Activated T-helper 2 cell treated with anti-CD3 and anti-CD28 coated beads, Interferon-gamma antibody, Interleukin-2, Interleukin-4, amounts not matched to agents 10 μg/mL and 5 μg/mL and 100 μg/mL, durations not matched to agents 14 hours and 24 hours and 36 hours (primary cell): ENCODE measurements at regions of chr2 and their contacts with region 1.

Region 1: GRCh38 chr2:207473049-207473930 is 56.5 kb upstream of the CREB1 start:
- DNase-seq: peak; percentile 37
- H3K4me3 Mint-ChIP-seq: no peak overlapping the region
- H3K27ac Mint-ChIP-seq: no peak overlapping the region
- H3K4me1 Mint-ChIP-seq: peaks cover 38% of the 10 kb centered on the region
- H3K27me3 Mint-ChIP-seq: no peaks in the 10 kb centered on the region

Region 2: GRCh38 chr2:206693399-206694137 is 779.7 kb before region 1 on chr2:
- intact Hi-C with region 1: loop called (anchors 2 kb)
- DNase-seq: no peak
- H3K4me3 Mint-ChIP-seq: no peak overlapping the region
- H3K27ac Mint-ChIP-seq: no peak overlapping the region
- H3K4me1 Mint-ChIP-seq: no peaks in the 10 kb centered on the region
- H3K27me3 Mint-ChIP-seq: peaks cover 16% of the 10 kb centered on the region

Region 3: GRCh38 chr2:206800506-206801417 is 672.5 kb before region 1 on chr2:
- intact Hi-C with region 1: loop called (anchors 1 kb)
- DNase-seq: peak; percentile 40
- H3K4me3 Mint-ChIP-seq: peak overlapping the region; percentile 57
- H3K27ac Mint-ChIP-seq: peak overlapping the region; percentile 13
- H3K4me1 Mint-ChIP-seq: peaks cover 18% of the 10 kb centered on the region
- H3K27me3 Mint-ChIP-seq: no peaks in the 10 kb centered on the region

Region 4: DNA sequence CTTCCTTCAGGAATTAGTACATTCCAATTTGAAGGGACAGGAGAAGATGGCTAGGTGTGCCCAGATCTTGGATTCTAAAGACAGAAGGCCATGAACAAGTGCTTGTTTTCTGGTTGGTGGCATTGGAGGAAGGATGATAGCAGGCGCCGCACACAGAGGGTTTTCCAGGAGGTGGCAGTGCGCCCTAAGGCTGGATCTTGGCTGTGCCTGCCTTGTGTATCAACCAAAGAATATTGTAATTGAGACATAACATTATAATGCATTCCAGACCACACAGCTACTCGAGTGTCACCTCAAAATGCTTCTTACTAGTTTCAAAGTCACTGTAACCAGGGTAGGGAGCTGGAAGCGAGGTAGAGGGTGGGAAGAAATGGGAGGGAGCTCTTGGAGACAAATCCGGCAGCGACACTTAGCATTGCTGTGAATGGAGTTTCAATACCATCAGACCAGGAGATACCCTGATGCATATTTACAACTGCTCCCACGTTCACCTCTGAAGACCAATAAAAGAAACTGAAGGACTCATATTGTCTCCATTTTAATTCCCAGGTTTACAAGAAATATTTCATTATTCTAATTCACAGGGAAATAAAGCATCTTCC is 491.4 kb before region 1 on chr2:
- intact Hi-C with region 1: loop called (anchors 1 kb)
- DNase-seq: peak; percentile 28
- H3K4me3 Mint-ChIP-seq: no peak overlapping the region
- H3K27ac Mint-ChIP-seq: no peak overlapping the region
- H3K4me1 Mint-ChIP-seq: peaks cover 20% of the 10 kb centered on the region
- H3K27me3 Mint-ChIP-seq: peaks cover 11% of the 10 kb centered on the region

Region 5: DNA sequence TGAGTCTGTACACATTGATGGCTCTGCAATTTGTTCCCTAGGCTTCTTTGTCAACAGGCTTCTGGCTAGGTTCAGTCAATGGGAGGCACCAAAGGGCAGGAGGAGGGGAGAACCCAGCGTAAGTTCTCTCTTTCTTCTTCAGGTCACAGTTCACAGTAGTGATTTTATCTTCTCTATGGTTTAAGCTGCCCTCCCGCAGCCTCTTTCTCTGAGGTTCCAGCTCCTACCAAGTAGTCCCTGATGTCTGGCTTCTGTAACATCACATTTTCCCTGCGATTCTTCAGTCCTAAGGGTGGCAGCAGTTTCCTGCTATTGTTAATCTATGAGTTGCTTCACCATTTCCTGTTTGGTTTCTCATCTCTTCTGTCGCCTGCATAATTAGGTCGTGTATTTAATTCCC is 426.6 kb before region 1 on chr2:
- intact Hi-C with region 1: loop called (anchors 1 kb)
- DNase-seq: peak; percentile 17
- H3K4me3 Mint-ChIP-seq: no peak overlapping the region
- H3K27ac Mint-ChIP-seq: no peak overlapping the region
- H3K4me1 Mint-ChIP-seq: peaks cover 12% of the 10 kb centered on the region
- H3K27me3 Mint-ChIP-seq: peaks cover 10% of the 10 kb centered on the region

Region 6: DNA sequence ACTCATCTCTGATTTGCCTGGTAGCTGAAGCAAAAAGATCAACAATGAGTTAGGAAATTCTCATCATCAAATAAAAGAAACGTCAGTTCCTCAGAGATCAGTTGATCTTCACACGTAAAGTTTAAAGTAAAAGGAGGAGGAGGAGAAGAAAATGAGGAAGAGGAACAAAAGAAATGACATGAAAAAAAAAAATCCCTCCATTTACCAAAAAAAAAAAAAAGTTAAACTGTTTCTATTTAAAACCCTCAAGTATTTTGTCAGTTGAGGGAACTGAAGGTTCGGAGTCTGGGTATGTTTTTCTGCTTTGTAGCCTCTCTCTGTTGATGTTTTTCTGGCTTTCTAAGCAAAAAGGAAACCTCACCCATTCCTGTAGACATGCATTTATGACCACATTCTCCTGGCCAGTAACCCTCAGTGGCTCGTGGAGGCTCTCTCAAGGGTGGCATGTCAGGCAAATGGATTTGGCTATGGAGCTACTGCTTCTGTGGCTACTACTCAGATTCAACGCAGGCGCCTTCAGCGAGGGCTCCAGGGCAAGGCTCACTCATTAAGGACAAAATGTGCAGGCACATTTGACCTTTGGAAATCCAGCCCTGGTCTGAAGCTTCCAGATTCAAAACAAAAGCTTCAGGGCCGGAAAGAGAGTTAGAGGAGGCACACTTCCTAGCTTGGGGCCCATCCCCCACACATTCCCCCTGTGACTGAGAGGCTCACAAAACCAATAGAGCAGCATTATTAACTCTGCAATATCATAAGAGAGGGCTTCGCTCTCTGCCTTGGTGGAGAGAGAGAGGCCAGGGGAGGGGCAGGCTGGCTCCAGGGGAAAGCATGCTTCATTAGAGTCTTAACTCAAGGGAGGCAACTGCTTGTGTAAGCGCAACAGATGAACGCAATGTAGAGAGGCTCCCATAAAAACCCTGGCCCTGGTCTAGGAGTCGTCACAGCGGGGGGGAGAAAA is 329.8 kb before region 1 on chr2:
- intact Hi-C with region 1: loop called (anchors 2 kb)
- DNase-seq: peak; percentile 61
- H3K4me3 Mint-ChIP-seq: peak overlapping the region; percentile 59
- H3K27ac Mint-ChIP-seq: peak overlapping the region; percentile 89
- H3K4me1 Mint-ChIP-seq: peaks cover 51% of the 10 kb centered on the region
- H3K27me3 Mint-ChIP-seq: no peaks in the 10 kb centered on the region

Region 7: DNA sequence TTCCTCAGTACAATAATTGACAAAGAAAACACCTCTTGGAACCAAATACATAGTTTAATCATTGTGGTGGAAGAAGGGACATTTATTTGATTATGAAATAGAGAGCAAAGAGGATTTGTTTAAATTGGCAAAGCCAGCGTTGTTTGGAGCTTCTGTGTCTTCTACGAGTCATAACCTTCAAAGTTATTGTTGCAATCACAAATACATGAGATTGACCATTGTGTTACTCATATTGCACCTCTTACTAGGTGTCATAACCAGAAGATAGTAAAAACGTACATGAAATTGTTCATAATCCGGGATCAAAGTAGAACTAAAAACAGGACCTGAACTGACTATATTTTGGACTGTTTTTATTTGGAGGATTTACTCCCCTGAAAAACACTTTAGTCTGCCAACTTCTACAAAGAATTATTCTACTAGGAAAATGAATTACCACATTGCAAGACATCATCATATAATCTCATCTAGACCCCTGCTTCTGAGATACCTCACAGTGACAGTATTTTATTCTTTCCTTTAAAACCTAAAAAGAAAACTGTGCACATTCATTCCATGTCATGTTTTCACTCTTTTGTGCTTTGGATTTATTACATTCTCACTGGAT is 155.8 kb before region 1 on chr2:
- intact Hi-C with region 1: loop called (anchors 2 kb)
- DNase-seq: no peak
- H3K4me3 Mint-ChIP-seq: no peak overlapping the region
- H3K27ac Mint-ChIP-seq: peak overlapping the region; percentile 77
- H3K4me1 Mint-ChIP-seq: peaks cover 64% of the 10 kb centered on the region
- H3K27me3 Mint-ChIP-seq: no peaks in the 10 kb centered on the region